ENCODE measurements at regions of chr19 and their contacts with region 1.

Region 1: DNA sequence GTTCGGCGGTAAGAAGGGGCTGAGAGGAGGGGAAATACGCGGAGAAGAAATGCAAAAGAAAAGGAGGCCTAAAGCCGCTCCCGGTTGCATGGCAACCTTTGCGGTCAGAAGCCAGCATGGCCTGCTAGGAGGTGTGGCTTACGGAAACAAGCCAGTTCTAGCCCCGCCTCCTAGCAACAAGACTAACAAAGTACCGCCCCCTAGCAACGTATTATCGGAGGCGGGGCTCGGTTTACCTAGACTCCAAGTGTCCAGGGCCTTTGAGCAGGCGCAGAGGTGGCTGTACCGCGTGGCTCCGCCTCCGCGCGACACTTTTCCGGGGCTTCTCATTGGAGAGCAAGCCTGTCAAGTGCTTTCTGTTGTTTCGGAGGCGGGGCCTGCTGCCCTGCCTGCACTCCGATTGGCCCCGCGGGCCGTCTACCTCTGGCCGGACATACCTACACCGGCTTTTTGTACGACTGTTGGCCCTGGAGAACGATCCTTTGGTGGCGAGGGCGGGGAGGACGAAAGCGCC is 337 bp upstream of the CYTH2 start:
- DNase-seq: peak; percentile 100
- H3K4me3 Mint-ChIP-seq: peak overlapping the region; percentile 93
- H3K27ac Mint-ChIP-seq: peak overlapping the region; percentile 94
- H3K4me1 Mint-ChIP-seq: peaks cover 13% of the 10 kb centered on the region
- H3K27me3 Mint-ChIP-seq: no peaks in the 10 kb centered on the region

Region 2: DNA sequence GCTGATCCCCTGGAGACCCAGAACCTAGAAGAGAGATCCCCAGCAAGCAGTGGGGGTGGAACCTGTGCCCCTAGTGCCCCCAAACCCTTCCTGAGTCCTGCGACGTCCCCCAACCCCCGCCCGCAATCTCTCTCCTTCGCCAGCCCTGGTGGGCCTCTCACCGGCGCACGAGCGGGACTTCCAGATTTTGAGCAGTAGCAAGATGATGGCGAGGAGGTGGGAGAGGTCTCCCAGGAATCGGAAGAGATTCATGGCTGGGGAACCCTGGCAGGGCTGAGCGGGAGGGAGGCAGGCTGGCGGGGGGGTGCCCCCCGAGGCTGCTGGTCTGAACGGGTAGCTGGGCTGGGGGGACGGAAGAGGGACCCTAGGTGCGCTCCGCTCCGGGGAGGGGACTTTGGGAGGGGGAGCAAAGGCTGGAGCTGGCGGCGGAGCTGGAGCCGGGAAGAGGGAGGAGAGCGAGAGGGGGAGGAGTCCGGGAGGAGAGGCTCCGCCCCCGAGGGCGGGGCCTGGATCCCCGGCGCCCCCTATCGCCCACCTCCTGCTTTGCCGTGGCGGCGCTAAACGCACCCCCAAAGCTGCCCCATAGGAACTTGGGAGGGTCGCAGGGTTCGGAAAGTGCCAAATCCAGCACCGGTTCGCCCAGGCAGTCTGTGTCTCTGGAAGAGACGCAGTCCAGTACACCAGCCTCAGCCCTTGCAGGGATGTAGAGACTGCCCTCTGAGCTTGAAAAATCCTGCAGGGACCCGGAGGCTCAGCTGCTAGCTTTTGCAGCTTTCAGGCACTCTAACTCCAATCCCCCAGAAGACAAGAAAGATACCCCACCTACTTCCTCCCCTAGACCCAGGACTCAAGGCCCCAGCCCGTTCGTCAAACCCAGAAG is 77.5 kb before region 1 on chr19 and contains the start of gene KDELR1:
- intact Hi-C with region 1: loop called (anchors 2 kb)
- DNase-seq: peak; percentile 93
- H3K4me3 Mint-ChIP-seq: peak within 1 kb of the TSS; percentile 96
- H3K27ac Mint-ChIP-seq: peak within 1 kb of the TSS; percentile 97
- H3K4me1 Mint-ChIP-seq: peaks cover 20% of the 10 kb centered on the region
- H3K27me3 Mint-ChIP-seq: peaks cover 34% of the 10 kb centered on the region
- total RNA-seq, gene KDELR1: 75.5 and 77.7 TPM in 2 replicates

Region 3: DNA sequence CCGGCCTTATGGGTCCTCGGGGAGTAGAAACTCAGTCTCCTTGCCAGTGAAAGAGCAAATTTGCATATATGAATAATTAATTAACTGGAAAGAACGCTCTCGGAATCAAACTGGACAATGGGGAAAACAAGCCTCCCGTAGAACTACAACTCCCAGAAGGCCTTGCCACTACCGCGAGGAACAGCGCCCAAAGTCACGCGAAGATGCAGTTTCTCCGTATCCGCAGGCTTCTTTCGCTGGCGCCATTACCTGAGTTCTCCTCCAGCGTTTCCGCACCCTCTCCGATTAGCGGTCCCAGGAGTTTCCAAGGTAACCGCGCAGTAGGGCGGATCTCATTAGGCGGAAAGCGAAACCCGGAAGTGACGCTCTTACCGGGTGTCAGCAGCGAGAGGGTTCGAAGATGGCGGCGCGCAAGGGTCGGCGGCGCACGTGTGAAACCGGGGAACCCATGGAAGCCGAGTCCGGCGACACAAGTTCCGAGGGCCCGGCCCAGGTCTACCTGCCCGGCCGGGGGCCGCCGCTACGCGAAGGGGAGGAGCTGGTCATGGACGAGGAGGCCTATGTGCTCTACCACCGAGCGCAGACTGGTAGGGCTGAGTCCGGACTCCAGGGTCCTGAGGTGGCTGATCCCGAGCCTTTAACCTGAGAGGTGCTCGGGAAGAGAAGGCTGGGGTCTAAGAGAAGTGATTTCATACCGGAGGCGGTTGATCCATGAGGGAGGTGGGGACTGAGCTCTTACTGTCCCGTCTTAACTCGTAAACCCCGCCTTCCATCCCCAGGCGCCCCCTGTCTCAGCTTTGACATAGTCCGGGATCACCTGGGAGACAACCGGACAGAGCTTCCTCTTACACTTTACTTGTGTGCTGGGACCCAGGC is 23.0 kb before region 1 on chr19 and contains the start of gene GRWD1:
- intact Hi-C with region 1: loop called (anchors 1 kb)
- DNase-seq: peak; percentile 98
- H3K4me3 Mint-ChIP-seq: peak within 1 kb of the TSS; percentile 96
- H3K27ac Mint-ChIP-seq: peak within 1 kb of the TSS; percentile 97
- H3K4me1 Mint-ChIP-seq: peaks cover 23% of the 10 kb centered on the region
- H3K27me3 Mint-ChIP-seq: peaks cover 25% of the 10 kb centered on the region
- total RNA-seq, gene GRWD1: 89.1 and 90.6 TPM in 2 replicates

Region 4: GRCh38 chr19:48492925-48493717 is 24.3 kb after region 1 on chr19:
- intact Hi-C with region 1: loop called (anchors 2 kb)
- DNase-seq: peak; percentile 95
- H3K4me3 Mint-ChIP-seq: peak overlapping the region; percentile 83
- H3K27ac Mint-ChIP-seq: peak overlapping the region; percentile 65
- H3K4me1 Mint-ChIP-seq: peaks cover 30% of the 10 kb centered on the region
- H3K27me3 Mint-ChIP-seq: peaks cover 36% of the 10 kb centered on the region

Measured in activated CD4-positive, alpha-beta T cell treated with anti-CD3 and anti-CD28 coated beads, Interleukin-2, amount 10 ng/mL, durations not matched to agents 24 days and 14 days (primary cell).